A673 (cell line): ENCODE measurements at regions of chr5 and their contacts with region 1.

Region 1: GRCh38 chr5:153974131-153974812 is 64.4 kb downstream of the FAM114A2 start:
- DNase-seq: peak; percentile 57
- H3K4me3 ChIP-seq: no peak overlapping the region
- H3K27ac ChIP-seq: no peak overlapping the region
- H3K4me1 ChIP-seq: no peaks in the 10 kb centered on the region
- H3K27me3 ChIP-seq: no peaks in the 10 kb centered on the region
- CTCF ChIP-seq: peak; percentile 75

Region 2: DNA sequence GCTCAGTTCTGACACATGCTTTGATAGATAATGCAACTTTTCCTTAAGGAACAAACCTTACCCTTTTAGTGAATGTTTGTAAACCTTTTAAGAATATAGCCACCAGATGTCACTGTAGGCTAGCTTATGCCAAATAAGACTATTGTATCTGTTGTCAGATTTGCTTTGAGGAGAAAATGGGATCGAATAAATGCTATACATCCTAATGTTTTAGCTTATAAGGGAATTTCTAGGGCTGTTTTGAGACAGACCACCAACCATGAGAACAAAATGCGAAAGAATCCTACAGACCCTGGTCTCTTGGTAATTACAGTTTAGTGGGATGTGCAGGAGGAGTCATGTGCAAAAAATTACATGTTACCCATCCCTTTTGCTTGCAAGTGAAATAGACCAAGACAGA is 1441.6 kb before region 1 on chr5:
- CTCF ChIA-PET with region 1: interaction called, 11 read pairs
- POLR2A ChIA-PET with region 1: no interaction called
- intact Hi-C with region 1: no loop called
- DNase-seq: peak; percentile 62
- H3K4me3 ChIP-seq: no peak overlapping the region
- H3K27ac ChIP-seq: no peak overlapping the region
- H3K4me1 ChIP-seq: no peaks in the 10 kb centered on the region
- H3K27me3 ChIP-seq: no peaks in the 10 kb centered on the region
- CTCF ChIP-seq: peak; percentile 61

Region 3: GRCh38 chr5:153641183-153641688 is 333.0 kb before region 1 on chr5:
- CTCF ChIA-PET with region 1: no interaction called
- POLR2A ChIA-PET with region 1: no interaction called
- intact Hi-C with region 1: no loop called
- DNase-seq: no peak
- H3K4me3 ChIP-seq: no peak overlapping the region
- H3K27ac ChIP-seq: no peak overlapping the region
- H3K4me1 ChIP-seq: no peaks in the 10 kb centered on the region
- H3K27me3 ChIP-seq: no peaks in the 10 kb centered on the region
- CTCF ChIP-seq: no peak

Region 4: GRCh38 chr5:154179846-154180710 is 205.8 kb after region 1 on chr5:
- CTCF ChIA-PET with region 1: interaction called, 4 read pairs
- POLR2A ChIA-PET with region 1: no interaction called
- intact Hi-C with region 1: loop called (anchors 5 kb)
- DNase-seq: peak; percentile 76
- H3K4me3 ChIP-seq: no peak overlapping the region
- H3K27ac ChIP-seq: no peak overlapping the region
- H3K4me1 ChIP-seq: no peaks in the 10 kb centered on the region
- H3K27me3 ChIP-seq: no peaks in the 10 kb centered on the region
- CTCF ChIP-seq: peak; percentile 76

Region 5: DNA sequence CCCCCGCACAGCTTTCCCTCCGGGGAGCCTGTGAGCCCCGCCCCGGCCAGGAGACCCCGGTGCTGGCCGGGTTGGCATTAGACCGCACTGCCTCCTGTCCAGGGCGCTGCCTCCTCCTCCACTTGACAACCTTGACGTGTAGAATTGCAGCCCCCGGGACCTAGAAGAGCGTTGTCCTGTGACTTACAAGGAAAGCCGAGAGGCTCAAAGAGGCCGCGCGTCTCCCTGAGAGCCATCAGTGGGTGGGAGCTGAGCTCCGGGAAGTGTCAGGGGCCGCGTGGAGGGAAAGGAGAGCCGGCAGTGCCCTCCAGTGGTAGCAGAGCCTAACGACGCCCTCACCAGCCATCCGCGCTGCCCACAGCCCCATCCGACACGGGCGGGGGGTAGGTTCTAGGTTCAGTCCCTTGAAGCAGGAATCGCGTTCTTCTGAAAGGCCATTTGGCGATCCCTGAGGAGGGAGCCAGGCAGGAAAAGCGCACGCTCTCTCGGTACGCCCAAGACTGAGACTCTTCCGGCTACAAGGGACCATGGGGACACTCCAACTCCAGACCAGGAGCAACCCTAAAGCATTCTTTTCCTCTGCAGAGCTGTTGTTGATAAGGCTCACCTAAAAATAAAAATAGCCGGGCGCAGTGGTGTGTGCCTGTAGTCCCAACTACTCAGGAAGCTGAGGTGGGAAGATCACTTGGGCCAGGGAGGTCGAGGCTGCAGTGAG is 431.0 kb after region 1 on chr5:
- CTCF ChIA-PET with region 1: interaction called, 7 read pairs
- POLR2A ChIA-PET with region 1: no interaction called
- intact Hi-C with region 1: loop called (anchors 2 kb)
- DNase-seq: peak; percentile 85
- H3K4me3 ChIP-seq: peak overlapping the region; percentile 32
- H3K27ac ChIP-seq: no peak overlapping the region
- H3K4me1 ChIP-seq: no peaks in the 10 kb centered on the region
- H3K27me3 ChIP-seq: no peaks in the 10 kb centered on the region
- CTCF ChIP-seq: peak; percentile 77

Region 6: GRCh38 chr5:154603978-154604679 is 629.9 kb after region 1 on chr5:
- CTCF ChIA-PET with region 1: interaction called, 10 read pairs
- POLR2A ChIA-PET with region 1: no interaction called
- intact Hi-C with region 1: no loop called
- DNase-seq: no peak
- H3K4me3 ChIP-seq: no peak overlapping the region
- H3K27ac ChIP-seq: no peak overlapping the region
- H3K4me1 ChIP-seq: no peaks in the 10 kb centered on the region
- H3K27me3 ChIP-seq: no peaks in the 10 kb centered on the region
- CTCF ChIP-seq: no peak

Region 7: DNA sequence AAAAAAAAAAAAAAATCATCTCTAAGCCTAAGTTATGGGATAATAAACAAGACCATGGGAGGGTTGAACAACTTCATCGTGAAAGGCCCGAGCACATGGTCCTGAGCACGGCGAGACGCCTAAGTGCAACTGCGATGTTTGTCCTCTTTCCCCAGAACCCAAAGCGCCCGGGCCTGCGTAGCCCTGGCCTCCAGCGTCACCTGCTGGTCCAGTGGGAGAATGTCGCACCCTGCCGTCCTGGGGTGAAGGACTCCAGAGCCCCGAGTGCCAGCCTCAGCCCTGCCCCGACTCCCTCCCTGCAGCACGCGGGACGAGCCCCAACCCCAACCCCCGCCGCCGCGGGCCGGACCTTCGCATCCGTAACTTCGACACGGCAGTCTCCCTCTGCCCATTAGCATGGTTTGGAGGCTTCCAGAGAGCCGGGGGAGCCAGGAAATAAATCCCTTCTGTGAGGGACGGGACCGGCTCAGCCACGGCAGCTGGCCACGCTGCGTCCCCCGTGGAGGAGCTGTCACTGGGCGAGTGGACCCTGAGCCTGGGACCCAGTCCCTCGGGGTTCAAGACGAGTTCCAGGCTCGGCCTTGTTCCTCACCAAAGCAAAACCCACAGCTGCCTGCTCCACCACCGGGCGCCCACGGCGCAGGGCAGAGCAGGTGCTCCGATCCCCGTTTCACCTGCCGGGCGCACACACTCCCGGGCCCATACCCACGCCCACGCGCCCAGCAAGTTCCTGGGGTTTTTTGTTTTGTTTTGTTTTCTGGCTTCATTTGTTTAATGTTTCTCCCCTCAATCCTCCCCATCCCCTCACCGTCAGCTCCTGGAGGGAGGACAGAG is 636.3 kb after region 1 on chr5:
- CTCF ChIA-PET with region 1: interaction called, 5 read pairs
- POLR2A ChIA-PET with region 1: no interaction called
- intact Hi-C with region 1: loop called (anchors 1 kb)
- DNase-seq: peak; percentile 85
- H3K4me3 ChIP-seq: peak overlapping the region; percentile 22
- H3K27ac ChIP-seq: no peak overlapping the region
- H3K4me1 ChIP-seq: peaks cover 5% of the 10 kb centered on the region
- H3K27me3 ChIP-seq: peaks cover 19% of the 10 kb centered on the region
- CTCF ChIP-seq: peak; percentile 84

Region 8: GRCh38 chr5:154647114-154647760 is 673.0 kb after region 1 on chr5:
- CTCF ChIA-PET with region 1: no interaction called
- POLR2A ChIA-PET with region 1: no interaction called
- intact Hi-C with region 1: loop called (anchors 5 kb)
- DNase-seq: no peak
- H3K4me3 ChIP-seq: no peak overlapping the region
- H3K27ac ChIP-seq: no peak overlapping the region
- H3K4me1 ChIP-seq: no peaks in the 10 kb centered on the region
- H3K27me3 ChIP-seq: no peaks in the 10 kb centered on the region
- CTCF ChIP-seq: no peak